Activated CD4-positive, alpha-beta memory T cell treated with anti-CD3 and anti-CD28 coated beads for 36 hours (primary cell): ENCODE measurements at regions of chr1 and their contacts with region 1.

Region 1: DNA sequence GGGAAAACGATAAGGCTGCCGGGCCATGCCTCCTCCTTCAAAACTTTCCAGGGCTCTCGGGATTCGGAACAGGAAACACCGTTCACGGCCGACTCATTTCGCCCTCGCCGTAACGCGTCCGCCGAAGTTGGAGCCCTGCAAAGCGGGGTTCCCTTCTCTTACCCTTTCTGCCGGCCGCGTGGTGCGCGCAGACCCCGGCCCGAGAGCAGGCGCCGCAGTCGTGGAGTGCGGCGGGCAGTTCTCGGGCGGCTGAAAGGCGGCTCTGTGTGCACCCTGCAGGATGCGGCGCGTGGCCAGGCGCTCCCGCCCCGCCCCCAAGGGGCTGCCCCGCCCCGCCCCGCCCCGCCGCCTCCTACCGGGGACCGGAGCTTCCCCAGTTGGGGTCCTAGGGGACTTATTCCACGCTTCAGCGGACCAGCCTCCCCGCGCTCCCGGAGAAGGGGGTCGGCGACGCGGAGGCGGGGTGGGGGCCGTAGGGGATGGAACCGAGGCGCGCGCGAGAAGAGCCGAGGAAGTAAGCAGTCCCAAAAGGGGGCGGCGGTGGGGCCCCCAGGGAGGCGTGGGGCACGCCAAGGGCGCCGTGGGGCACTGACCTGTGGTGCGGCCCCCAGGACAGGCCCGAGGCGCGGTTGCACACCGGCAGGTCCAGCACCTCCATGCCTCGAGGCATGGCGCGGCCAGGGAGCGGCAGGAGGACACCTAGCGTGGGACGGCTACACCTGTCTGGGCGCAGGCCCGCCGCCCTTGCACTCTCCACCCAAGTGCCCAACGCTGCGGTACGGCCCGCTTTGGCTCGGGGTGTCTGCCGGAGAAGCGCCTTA is at the start of gene MCOLN2:
- DNase-seq: peak; percentile 68
- H3K4me3 Mint-ChIP-seq: peak within 1 kb of the TSS; percentile 77
- H3K27ac Mint-ChIP-seq: peak within 1 kb of the TSS; percentile 95
- H3K4me1 Mint-ChIP-seq: peaks cover 40% of the 10 kb centered on the region
- H3K27me3 Mint-ChIP-seq: peaks cover 12% of the 10 kb centered on the region
- total RNA-seq, gene MCOLN2: 42.1 to 43.2 TPM

Region 2: GRCh38 chr1:84573967-84574842 is 422.9 kb before region 1 on chr1 and contains the start of gene CTBS:
- CTCF ChIA-PET with region 1: no interaction called
- POLR2A ChIA-PET with region 1: no interaction called
- intact Hi-C with region 1: loop called (anchors 2 kb)
- DNase-seq: peak; percentile 90
- H3K4me3 Mint-ChIP-seq: peak within 1 kb of the TSS; percentile 98
- H3K27ac Mint-ChIP-seq: peak within 1 kb of the TSS; percentile 100
- H3K4me1 Mint-ChIP-seq: peaks cover 35% of the 10 kb centered on the region
- H3K27me3 Mint-ChIP-seq: peaks cover 1% of the 10 kb centered on the region
- total RNA-seq, gene CTBS: 22.9 to 24.2 TPM

Region 3: GRCh38 chr1:84973498-84974334 is 23.3 kb before region 1 on chr1:
- CTCF ChIA-PET with region 1: interaction called, 8 read pairs
- POLR2A ChIA-PET with region 1: interaction called, 25 read pairs
- intact Hi-C with region 1: loop called (anchors 1 kb)
- DNase-seq: peak; percentile 37
- H3K4me3 Mint-ChIP-seq: no peak overlapping the region
- H3K27ac Mint-ChIP-seq: peak overlapping the region; percentile 55
- H3K4me1 Mint-ChIP-seq: peaks cover 76% of the 10 kb centered on the region
- H3K27me3 Mint-ChIP-seq: no peaks in the 10 kb centered on the region

Region 4: GRCh38 chr1:85048296-85049064 is 51.4 kb after region 1 on chr1 and contains the start of gene MCOLN3:
- CTCF ChIA-PET with region 1: no interaction called
- POLR2A ChIA-PET with region 1: no interaction called
- intact Hi-C with region 1: loop called (anchors 1 kb)
- DNase-seq: peak; percentile 54
- H3K4me3 Mint-ChIP-seq: peak within 1 kb of the TSS; percentile 64
- H3K27ac Mint-ChIP-seq: no peak within 1 kb of the TSS
- H3K4me1 Mint-ChIP-seq: peaks cover 17% of the 10 kb centered on the region
- H3K27me3 Mint-ChIP-seq: peaks cover 39% of the 10 kb centered on the region
- total RNA-seq, gene MCOLN3: 0.22 to 0.62 TPM

Region 5: GRCh38 chr1:85200870-85201339 is 203.8 kb after region 1 on chr1 and contains the start of gene SYDE2:
- CTCF ChIA-PET with region 1: no interaction called
- POLR2A ChIA-PET with region 1: no interaction called
- intact Hi-C with region 1: loop called (anchors 2 kb)
- DNase-seq: peak; percentile 76
- H3K4me3 Mint-ChIP-seq: peak within 1 kb of the TSS; percentile 97
- H3K27ac Mint-ChIP-seq: peak within 1 kb of the TSS; percentile 89
- H3K4me1 Mint-ChIP-seq: peaks cover 26% of the 10 kb centered on the region
- H3K27me3 Mint-ChIP-seq: peaks cover 5% of the 10 kb centered on the region
- total RNA-seq, gene SYDE2: 2.7 to 2.8 TPM

Region 6: GRCh38 chr1:85374160-85374559 is 377.1 kb after region 1 on chr1:
- CTCF ChIA-PET with region 1: no interaction called
- POLR2A ChIA-PET with region 1: no interaction called
- intact Hi-C with region 1: no loop called
- DNase-seq: no peak
- H3K4me3 Mint-ChIP-seq: no peak overlapping the region
- H3K27ac Mint-ChIP-seq: no peak overlapping the region
- H3K4me1 Mint-ChIP-seq: no peaks in the 10 kb centered on the region
- H3K27me3 Mint-ChIP-seq: no peaks in the 10 kb centered on the region

Region 7: DNA sequence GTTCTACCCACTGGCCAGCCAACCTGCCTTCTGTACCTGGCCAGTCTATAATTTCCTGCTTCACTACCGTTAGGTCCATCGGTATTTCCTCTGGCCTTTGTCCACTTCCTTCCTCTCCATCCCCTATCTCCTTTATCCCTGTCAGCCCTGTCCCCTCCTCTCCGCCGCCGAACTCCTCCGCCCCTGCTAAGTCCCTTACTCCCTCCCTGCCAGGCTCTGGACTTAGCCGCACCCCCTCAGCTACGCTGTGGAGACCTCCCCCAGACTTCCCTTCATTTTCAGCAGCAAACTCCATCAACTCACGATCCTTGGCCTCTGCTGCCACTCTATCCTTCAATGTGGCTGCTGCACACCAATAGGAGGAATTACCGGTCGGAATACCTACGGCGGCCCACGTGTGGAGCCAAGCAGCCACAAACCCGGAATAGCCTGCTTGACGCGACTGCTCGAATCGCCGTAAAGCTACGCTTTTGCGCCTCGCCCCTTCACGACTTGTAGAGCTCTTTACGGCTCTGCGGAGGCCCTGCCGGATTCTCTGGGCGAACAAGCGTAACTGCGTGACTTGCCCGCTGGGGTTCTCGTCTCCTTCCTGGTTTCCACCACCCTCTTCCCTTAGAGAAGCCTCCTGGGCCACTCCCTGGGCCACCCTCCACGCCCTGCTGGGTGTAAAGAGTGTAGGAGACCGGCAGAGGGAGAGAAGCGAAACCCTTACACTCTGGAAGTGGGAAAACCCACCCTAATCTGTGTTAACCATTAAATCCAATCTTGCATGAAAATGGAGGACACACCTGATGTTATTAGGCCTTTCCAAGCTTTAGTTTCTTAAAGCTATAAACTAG is 711.2 kb after region 1 on chr1 and contains the start of gene ZNHIT6:
- CTCF ChIA-PET with region 1: no interaction called
- POLR2A ChIA-PET with region 1: no interaction called
- intact Hi-C with region 1: loop called (anchors 2 kb)
- DNase-seq: peak; percentile 93
- H3K4me3 Mint-ChIP-seq: no peak within 1 kb of the TSS
- H3K27ac Mint-ChIP-seq: no peak within 1 kb of the TSS
- H3K4me1 Mint-ChIP-seq: peaks cover 23% of the 10 kb centered on the region
- H3K27me3 Mint-ChIP-seq: no peaks in the 10 kb centered on the region
- total RNA-seq, gene ZNHIT6: 18.7 TPM

Region 8: GRCh38 chr1:85838238-85838637 is 841.2 kb after region 1 on chr1:
- CTCF ChIA-PET with region 1: no interaction called
- POLR2A ChIA-PET with region 1: no interaction called
- intact Hi-C with region 1: no loop called
- DNase-seq: no peak
- H3K4me3 Mint-ChIP-seq: no peak overlapping the region
- H3K27ac Mint-ChIP-seq: no peak overlapping the region
- H3K4me1 Mint-ChIP-seq: no peaks in the 10 kb centered on the region
- H3K27me3 Mint-ChIP-seq: no peaks in the 10 kb centered on the region